ENCODE measurements at regions of chr18 and their contacts with region 1.

Region 1: GRCh38 chr18:13874558-13874957 is 40.8 kb downstream of the MC2R start:
- DNase-seq: no peak
- H3K4me3 ChIP-seq: no peak overlapping the region
- H3K27ac ChIP-seq: no peak overlapping the region
- H3K4me1 ChIP-seq: no peaks in the 10 kb centered on the region
- H3K27me3 ChIP-seq: peaks cover 0 to 18% of the 10 kb centered on the region in 2 donors
- CTCF ChIP-seq: no peak

Region 2: GRCh38 chr18:13909141-13909940 is 34.8 kb after region 1 on chr18:
- intact Hi-C with region 1: loop called (anchors 1 kb)
- DNase-seq: no peak
- H3K4me3 ChIP-seq: no peak overlapping the region
- H3K27ac ChIP-seq: no peak overlapping the region
- H3K4me1 ChIP-seq: no peaks in the 10 kb centered on the region
- H3K27me3 ChIP-seq: no peaks in the 10 kb centered on the region
- CTCF ChIP-seq: no peak

Region 3: DNA sequence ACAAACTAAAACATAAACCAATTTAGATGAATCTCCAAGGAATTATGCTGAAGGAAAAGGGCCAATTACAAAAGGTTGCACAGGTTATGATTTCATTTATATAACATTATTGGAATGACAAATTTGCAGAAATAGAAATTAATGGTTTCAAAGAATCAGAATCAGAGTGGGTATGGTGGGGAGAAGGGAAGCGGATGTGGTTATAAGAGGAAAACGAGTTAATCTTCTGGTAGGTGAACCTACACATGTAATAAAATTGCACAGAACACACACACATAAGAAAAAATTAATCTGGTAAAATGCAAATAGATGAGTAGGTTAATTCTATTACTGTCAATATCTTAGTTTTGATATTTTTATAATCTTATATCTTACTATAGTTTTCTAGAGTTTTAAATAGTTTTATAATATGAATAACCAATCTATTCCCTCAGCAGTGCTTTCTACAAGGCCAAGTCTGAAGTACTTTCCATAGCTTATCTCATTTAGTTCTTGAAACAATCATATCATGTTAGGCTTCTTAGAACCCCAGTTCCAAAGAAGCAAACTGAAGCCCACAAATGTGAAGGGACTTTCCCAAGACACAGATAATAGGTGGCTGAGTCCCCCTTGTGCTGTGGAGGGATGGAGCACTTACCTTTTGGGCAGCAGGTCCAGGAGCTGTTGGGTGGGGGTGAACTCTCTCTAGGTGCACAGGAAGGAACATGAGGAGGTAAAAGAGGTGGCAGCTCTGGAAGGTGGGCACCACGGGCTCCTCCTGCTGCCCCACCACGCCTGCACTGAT is 226.1 kb after region 1 on chr18:
- intact Hi-C with region 1: no loop called
- DNase-seq: no peak
- H3K4me3 ChIP-seq: no peak overlapping the region
- H3K27ac ChIP-seq: no peak overlapping the region
- H3K4me1 ChIP-seq: no peaks in the 10 kb centered on the region
- H3K27me3 ChIP-seq: no peaks in the 10 kb centered on the region
- CTCF ChIP-seq: no peak

Measured in tibial artery (tissue), 4 donors.